Tibial artery (tissue), 4 donors: ENCODE measurements at regions of chr19 and their contacts with region 1.

Region 1: DNA sequence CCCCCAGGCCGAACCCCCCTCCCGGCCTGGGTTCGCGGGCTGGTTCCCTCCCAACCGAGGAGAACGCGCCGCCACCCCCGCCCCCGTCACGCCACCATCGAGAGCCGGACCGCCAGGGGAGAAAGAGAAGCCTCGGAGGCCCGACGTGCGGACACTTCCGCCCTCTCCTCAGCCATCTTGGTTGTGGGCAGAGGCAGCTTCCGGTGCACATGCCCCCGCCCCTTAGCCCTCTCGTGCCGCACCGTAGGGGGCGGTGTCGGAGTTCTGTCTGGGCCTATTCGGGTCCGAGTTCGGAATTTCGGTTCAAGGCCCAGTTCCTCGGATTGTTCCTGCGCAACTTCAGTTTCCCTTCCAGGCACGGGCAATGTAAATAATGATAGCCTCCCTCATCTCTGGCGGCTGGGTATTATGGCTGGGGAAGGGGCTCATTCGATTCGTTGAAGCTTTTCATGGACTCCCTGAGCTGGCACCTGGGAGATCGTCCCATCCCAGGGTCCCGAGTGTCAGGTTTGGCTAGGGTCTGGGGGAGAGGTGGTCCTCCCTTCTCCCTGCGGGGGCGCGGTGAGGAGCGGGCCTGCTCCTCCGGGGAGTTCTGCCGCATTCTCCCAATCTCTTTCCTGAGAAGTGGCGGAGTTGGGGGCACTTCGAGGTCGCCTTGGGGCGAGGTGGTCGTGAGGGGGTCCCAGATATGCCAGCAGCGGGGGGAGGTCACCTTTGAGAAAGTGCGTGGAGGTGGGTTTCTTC is at the starts of genes IER2 and STX10:
- DNase-seq: peak; percentile 96 to 99
- H3K4me3 ChIP-seq: peak within 1 kb of the TSS; percentile 94 to 98
- H3K27ac ChIP-seq: peak within 1 kb of the TSS; percentile 99
- H3K4me1 ChIP-seq: peaks cover 0 to 28% (median 19%) of the 10 kb centered on the region in 4 donors
- H3K27me3 ChIP-seq: no peaks in the 10 kb centered on the region
- CTCF ChIP-seq: peak; percentile 41 to 46

Region 2: DNA sequence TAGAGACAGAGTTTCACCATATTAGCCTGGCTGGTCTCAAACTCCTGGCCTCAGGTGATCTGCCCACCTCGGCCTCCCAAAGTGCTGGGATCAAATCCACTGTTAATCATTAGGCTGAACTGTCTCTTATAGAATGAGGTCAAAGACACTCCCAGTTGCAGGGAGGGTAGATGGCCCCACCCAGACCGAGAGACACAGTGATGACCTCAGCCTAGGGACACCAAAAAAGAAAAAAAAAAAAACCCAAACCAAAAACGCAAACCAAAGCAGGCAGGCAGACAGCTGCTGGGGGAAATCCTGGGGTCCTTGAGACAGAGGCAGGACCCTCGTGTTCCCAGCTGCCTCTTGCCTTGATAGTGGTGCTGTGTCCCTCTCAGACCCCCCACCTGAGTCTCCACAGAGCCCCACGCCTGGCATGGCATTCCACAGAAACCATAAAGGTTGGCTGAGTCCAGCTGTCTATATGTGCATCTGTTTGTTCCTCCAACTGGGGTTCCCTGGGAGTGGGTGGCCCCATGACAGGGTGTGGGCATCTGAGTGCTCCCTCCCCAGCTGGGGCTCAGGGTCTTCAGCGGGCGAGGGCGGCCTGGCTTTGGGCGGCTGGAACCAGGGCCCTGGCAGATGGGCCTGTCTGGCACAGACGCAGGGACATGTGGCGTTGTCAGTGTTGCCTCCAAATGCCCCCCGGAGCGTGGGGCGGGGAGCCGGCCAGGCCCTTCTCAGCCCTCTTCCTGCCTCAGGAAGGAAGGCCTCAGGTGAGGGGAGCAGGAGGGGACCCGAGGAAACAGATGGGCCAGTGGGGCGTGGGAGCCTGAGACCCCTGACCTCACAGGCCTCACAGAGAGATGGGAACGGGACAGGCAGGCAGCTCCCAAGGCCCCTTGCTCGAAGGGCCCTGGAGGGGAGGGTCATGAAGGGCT is 175.8 kb before region 1 on chr19:
- intact Hi-C with region 1: no loop called
- DNase-seq: no peak
- H3K4me3 ChIP-seq: no peak overlapping the region
- H3K27ac ChIP-seq: no peak overlapping the region
- H3K4me1 ChIP-seq: peaks cover 0 to 6% (median 2%) of the 10 kb centered on the region in 4 donors
- H3K27me3 ChIP-seq: no peaks in the 10 kb centered on the region
- CTCF ChIP-seq: no peak

Region 3: GRCh38 chr19:13162518-13163314 is 12.4 kb after region 1 on chr19:
- intact Hi-C with region 1: loop called (anchors 1 kb)
- DNase-seq: peak; percentile 97 to 99
- H3K4me3 ChIP-seq: peak overlapping the region; percentile 43 to 53
- H3K27ac ChIP-seq: peak overlapping the region; percentile 85 to 86
- H3K4me1 ChIP-seq: peaks cover 10 to 48% (median 42%) of the 10 kb centered on the region in 4 donors
- H3K27me3 ChIP-seq: no peaks in the 10 kb centered on the region
- CTCF ChIP-seq: no peak

Region 4: DNA sequence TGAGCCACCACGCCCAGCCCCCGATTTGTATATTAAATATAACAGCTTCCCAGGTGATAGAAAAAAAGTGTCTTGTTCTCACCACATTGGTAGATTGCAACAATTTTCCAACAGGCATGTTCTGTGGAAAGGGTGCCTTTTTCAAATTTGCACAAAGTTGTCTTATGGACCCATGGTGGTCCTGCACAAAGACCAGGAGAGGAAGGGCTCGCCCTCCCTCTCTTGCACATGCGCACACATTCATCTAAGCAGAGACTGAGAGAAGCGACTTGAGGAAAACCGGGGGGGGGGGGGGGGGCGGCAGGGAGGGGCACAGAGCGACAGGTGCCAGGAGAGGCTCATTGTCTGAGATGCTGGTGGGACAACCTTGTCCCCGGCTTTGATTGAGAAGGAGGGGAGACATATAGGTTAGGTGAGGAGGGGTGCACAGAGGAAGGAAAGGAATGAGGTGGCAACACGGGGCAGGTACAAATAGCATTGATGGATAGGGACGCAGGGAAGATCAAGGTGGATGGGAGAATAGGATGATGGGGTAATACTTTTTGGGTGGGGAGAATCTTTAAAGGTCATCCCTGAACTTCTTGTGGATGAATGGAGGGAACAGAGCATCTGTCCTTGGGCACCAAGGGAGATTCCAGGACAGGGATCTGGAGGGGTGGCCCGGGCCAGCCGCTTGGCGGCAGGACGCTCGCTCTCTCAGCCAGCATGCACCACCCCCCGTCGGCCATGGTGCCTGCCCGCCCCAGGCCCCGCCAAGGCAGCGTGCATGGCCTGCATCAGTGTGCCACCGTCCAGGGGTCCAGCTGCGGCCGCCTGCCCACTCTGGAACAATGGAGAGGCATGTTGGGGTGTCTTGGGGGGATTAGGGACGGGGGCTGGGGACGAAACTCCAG is 75.9 kb after region 1 on chr19:
- intact Hi-C with region 1: no loop called
- DNase-seq: no peak
- H3K4me3 ChIP-seq: no peak overlapping the region
- H3K27ac ChIP-seq: no peak overlapping the region
- H3K4me1 ChIP-seq: no peaks in the 10 kb centered on the region
- H3K27me3 ChIP-seq: peaks cover 0 to 37% of the 10 kb centered on the region in 2 donors
- CTCF ChIP-seq: no peak

Region 5: DNA sequence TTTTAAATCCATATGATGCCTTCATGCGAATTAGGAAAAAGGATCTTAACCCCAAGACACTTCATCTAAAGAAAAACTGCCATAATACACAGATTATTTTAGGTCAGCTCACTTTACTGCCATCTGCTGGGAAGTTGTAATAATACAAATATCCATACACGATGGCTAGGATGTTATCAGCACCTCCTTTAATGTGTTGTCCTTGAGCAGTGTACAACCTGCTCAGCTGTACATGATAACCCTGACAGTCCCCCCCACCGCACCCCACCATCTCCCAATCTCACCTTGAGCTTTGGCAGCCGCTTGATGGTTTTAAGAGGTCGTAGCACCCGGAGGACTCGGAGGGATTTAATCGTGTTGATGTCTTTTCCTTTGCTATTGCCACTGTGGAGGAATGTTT is 112.1 kb after region 1 on chr19:
- intact Hi-C with region 1: loop called (anchors 10 kb)
- DNase-seq: no peak
- H3K4me3 ChIP-seq: no peak overlapping the region
- H3K27ac ChIP-seq: no peak overlapping the region
- H3K4me1 ChIP-seq: peaks cover 0 to 5% (median 2%) of the 10 kb centered on the region in 4 donors
- H3K27me3 ChIP-seq: peaks cover 0 to 11% of the 10 kb centered on the region in 2 donors
- CTCF ChIP-seq: peak; percentile 49 to 72

Region 6: GRCh38 chr19:13846557-13847406 is 696.4 kb after region 1 on chr19:
- intact Hi-C with region 1: loop called (anchors 10 kb)
- DNase-seq: peak; percentile 91 to 96
- H3K4me3 ChIP-seq: peak overlapping the region; percentile 55 to 63
- H3K27ac ChIP-seq: peak overlapping the region; percentile 99
- H3K4me1 ChIP-seq: peaks cover 9 to 75% (median 63%) of the 10 kb centered on the region in 4 donors
- H3K27me3 ChIP-seq: no peaks in the 10 kb centered on the region
- CTCF ChIP-seq: no peak